AG04449 (cell line): ENCODE measurements at regions of chr17 and their contacts with region 1.

Region 1: DNA sequence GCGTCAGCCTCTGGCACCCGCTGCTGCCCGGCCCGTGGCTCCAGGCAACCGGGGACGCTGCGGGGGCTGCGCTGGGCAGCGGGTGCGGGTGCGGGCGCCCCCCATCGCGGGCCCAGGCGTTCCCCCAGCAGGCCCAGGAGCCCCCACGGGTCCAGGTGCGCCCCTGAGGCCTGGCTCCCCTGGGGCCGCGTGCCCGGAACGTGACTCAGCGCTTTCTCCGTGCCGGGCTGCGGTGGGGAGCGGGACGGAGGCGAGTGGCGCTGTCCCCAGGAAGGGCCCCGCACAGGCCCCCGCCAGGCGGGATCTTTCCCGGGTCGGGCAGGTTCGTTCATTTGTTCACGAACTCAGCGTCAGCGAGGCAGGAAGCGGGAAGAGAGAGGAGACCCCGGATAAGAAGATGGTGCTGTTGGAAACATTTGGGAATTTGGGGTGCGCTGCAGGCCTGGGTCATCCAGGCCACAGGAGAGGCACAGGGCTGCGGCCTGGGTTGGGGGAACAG is 18.4 kb upstream of the EXOC7 start:
- DNase-seq: no peak
- H3K4me3 ChIP-seq: peak overlapping the region; percentile 23
- CTCF ChIP-seq: no peak

Region 2: GRCh38 chr17:76079956-76080767 is 41.8 kb before region 1 on chr17:
- CTCF ChIA-PET with region 1: no interaction called
- POLR2A ChIA-PET with region 1: no interaction called
- DNase-seq: no peak
- H3K4me3 ChIP-seq: no peak overlapping the region
- CTCF ChIP-seq: no peak

Region 3: GRCh38 chr17:76103274-76104139 is 18.5 kb before region 1 on chr17 and contains the start of gene EXOC7:
- CTCF ChIA-PET with region 1: interaction called, 22 read pairs
- POLR2A ChIA-PET with region 1: no interaction called
- DNase-seq: peak; percentile 16
- H3K4me3 ChIP-seq: peak within 1 kb of the TSS; percentile 92
- CTCF ChIP-seq: peak; percentile 10

Region 4: DNA sequence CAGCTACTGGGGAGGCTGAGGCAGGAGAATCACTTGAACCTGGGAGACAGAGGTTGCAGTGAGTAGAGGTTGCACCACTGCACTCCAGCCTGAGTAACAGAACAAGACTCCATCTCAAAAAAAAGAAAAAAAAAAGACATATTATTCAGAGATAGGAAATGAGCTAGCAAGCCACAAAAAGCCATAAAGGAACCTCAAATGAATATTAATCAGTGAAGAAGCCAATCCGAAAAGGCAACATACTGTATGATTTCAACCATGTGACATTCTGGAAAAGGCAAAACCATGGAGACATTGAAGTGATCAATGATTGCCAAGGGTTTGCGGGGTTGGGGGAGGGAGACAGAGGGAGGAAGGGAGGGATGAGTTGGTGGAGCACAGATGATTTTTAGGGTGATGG is 10.0 kb before region 1 on chr17:
- CTCF ChIA-PET with region 1: interaction called, 20 read pairs
- POLR2A ChIA-PET with region 1: no interaction called
- DNase-seq: no peak
- H3K4me3 ChIP-seq: no peak overlapping the region
- CTCF ChIP-seq: no peak

Region 5: DNA sequence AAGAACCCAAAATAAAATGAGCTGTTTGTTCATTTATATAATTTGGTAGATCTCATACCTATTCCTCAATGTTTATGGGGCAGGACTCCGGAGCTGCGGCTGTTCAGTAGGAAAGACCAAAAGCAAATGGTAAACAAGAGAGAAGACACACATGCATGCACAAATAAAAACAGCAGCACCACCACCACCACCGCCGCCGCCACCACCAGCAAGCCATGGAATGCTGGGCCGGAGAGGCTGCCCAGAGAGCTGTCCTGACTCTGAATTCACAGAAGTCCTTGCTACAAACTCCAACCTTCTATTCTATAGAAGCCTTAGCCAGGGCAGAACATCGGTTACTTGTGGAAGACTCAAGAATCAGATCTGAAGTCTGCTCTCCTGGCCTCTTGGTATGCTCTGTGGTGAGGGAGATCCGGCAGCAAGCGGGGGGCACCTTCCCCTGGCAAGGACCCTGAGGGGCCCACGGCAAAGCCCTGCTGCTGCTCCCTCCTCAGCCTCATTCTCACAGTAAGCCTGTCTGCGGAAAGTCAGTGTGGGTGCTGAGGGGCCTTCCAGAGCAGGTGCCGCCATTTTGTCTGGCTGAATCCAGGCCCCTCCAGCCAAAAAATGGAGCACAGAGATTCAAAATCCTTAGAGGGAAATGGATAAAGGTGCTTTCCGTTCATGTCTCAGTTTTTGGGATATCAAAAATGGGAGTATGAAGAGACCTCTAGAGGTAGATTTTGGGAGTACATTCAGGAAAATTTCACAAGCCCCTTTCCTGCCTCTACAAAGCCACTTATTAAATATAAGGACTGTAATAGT is 25.4 kb after region 1 on chr17:
- CTCF ChIA-PET with region 1: interaction called, 10 read pairs
- POLR2A ChIA-PET with region 1: no interaction called
- DNase-seq: no peak
- H3K4me3 ChIP-seq: no peak overlapping the region
- CTCF ChIP-seq: peak; percentile 33

Region 6: DNA sequence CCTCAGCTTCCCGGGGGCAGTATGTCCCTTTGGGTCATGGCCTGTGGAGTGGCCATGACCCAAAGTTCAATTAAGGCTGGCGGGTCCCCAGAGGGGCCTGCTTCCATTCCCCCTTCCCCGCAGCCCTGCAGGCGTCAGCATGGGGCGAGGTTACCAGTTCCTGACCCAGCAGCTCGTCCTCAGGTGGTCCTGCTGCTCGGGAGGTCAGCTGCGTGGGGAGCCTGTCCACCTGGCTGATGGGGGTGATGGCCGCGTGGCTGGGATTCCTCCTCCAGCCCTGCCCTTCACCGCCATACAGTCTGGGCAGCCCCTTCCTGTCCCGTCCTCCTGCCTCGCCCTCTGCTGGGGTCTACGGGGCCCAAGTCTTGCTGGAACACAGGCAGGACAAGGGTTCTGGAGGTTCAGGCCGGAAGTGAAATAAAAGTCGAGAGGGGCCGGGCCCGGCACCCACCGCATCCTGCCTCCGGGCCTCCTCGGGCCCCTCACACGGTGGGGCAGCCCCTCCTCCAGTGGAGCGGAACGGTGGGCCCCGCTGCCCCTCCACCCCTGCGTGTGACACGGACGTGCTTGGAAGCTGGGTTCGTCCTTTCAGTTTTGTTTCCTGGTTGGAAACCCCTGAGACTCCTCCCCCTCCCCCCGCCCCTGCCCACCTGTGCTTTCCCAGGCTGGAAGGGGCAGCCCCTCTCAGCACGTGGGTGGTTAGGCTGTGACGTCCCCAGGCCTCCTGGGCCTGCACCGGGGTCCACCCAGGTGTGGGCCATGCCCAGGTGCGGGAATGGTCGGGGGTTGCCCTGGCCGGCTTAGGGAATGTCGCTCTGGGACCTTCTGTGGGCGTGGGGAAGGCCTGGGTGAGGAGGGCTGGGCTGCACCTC is 149.9 kb after region 1 on chr17:
- CTCF ChIA-PET with region 1: interaction called, 11 read pairs
- POLR2A ChIA-PET with region 1: no interaction called
- DNase-seq: no peak
- H3K4me3 ChIP-seq: no peak overlapping the region
- CTCF ChIP-seq: no peak